ENCODE measurements at regions of chr5 and their contacts with region 1.

Region 1: GRCh38 chr5:132007399-132008165 is 3.9 kb downstream of the ACSL6 start:
- DNase-seq: peak; percentile 64 to 94 (median 80)
- H3K4me3 ChIP-seq: peak overlapping the region in 6 of 59 donors; percentile 12 to 87 (median 51)
- H3K27ac ChIP-seq: peak overlapping the region; percentile 6 to 99 (median 90)
- H3K27me3 ChIP-seq: no peaks in the 10 kb centered on the region
- CTCF ChIP-seq: peak; percentile 68 to 96 (median 86)

Region 2: DNA sequence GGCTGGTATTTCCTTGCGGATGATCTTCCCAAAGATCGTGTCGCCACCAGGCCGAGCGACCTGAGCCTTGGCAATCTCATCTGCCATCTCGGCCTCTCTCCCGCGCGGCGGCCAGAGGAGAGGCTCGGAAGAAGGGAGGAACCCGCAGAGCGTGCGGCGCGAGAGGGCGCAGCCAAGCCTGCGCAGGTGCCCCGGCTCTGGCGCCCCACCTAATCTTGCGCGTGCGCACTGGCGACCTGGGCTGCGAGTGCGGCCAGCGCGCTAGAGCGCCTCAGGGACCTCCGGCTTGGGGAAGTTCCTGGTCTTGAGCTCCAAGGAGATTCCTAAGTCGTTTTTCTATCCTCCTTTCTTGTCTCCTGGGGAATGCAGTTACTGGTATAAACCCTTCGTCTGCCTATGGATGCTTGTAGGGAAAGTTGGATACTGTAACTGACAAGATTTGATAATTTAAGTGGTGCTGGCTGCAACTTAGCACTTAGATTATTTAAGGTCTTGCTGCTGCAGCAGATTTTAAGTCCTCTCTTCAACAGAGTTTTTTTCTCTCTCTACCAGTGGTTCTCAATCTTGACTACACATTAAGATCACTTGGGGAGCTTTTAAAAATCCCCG is 842.4 kb before region 1 on chr5 and contains the start of gene HINT1:
- intact Hi-C with region 1: loop called in 1 of 2 experiments (anchors 10 kb)
- DNase-seq: peak; percentile 71 to 92 (median 86)
- H3K4me3 ChIP-seq: peak within 1 kb of the TSS; percentile 60 to 97 (median 89)
- H3K27ac ChIP-seq: peak within 1 kb of the TSS; percentile 65 to 99 (median 97)
- H3K27me3 ChIP-seq: no peaks in the 10 kb centered on the region
- CTCF ChIP-seq: peak in 49 of 56 donors; percentile 17 to 75 (median 51)
- total RNA-seq, gene HINT1: 99.1 to 267 (median 191) TPM

Region 3: GRCh38 chr5:131589510-131590348 is 417.9 kb before region 1 on chr5:
- intact Hi-C with region 1: loop called (anchors 2 to 5 kb)
- DNase-seq: no peak
- H3K4me3 ChIP-seq: no peak overlapping the region
- H3K27ac ChIP-seq: peak overlapping the region in 46 of 59 donors; percentile 2 to 77 (median 48)
- H3K27me3 ChIP-seq: no peaks in the 10 kb centered on the region
- CTCF ChIP-seq: peak; percentile 68 to 97 (median 87)

Region 4: DNA sequence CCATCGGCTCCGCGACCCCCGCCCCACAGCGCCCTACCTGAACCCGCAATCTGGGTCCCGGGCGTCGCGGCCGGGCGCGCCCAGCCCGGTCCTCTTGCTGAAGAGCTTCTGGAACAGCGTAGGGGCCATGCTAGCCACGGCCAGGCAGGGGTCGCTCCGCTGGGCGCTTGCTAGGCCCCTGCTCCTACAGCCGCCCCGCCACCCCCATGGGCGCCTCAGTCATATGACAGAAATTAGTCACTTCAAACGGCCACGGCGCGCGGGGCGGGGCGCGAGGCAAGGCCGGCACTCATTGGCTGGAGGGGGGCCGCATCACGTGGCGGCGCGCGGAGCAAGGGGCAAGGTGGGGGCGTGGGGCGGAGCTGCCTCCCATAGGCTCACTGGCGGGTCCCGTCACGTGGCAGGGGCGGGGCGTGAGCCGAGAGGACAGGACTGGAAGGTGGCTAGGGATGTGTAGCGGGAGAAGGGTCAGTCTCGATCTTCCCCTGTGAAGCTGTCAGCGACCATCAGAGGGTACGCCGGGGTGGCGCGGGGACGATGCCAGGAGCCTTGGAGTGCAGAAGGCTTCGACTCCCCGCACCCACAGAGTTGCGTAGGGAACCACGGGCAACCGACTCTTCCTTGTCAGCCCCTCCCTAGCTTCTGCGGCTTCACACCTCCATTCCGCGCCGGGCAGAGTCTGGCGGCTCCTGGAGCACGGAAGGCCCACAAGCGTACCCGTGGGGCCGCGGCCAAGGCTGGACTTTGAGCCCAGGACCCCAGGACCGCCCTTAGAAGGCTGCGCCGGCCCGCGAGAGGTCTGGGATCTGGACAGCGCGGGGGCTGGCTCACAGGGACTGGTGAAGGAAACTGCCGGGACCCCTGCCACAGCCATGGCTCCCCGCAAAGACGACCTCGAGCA is 210.5 kb before region 1 on chr5 and contains the start of gene FNIP1:
- intact Hi-C with region 1: loop called (anchors 5 kb)
- DNase-seq: peak; percentile 99 to 100 (median 100)
- H3K4me3 ChIP-seq: peak within 1 kb of the TSS; percentile 68 to 100 (median 97)
- H3K27ac ChIP-seq: peak within 1 kb of the TSS; percentile 95 to 100 (median 99)
- H3K27me3 ChIP-seq: no peaks in the 10 kb centered on the region
- CTCF ChIP-seq: peak in 21 of 56 donors; percentile 8 to 46 (median 21)
- total RNA-seq, gene FNIP1: 40.0 to 84.5 (median 54.3) TPM

Region 5: GRCh38 chr5:131986161-131986912 is 21.2 kb before region 1 on chr5:
- intact Hi-C with region 1: loop called in 1 of 2 experiments (anchors 2 kb)
- DNase-seq: peak in 2 of 10 donors; percentile 35 to 67
- H3K4me3 ChIP-seq: no peak overlapping the region
- H3K27ac ChIP-seq: peak overlapping the region in 56 of 59 donors; percentile 7 to 90 (median 78)
- H3K27me3 ChIP-seq: no peaks in the 10 kb centered on the region
- CTCF ChIP-seq: no peak

Region 6: DNA sequence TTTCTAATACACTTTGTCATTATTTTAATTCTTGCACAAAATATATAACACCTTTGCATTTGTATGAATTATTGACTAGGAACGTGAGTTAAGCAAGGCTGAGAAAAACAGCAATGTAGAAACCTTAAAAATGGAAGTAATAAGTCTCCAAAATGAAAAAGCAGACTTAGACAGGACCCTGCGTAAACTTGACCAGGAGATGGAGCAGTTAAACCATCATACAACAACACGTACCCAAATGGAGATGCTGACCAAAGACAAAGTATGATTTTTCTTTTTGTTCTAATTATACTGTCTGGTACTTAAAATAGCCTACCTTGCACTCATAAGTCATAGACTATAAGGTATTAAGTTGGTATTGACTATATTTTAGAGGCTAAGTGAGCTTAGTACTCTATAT is 583.6 kb after region 1 on chr5:
- intact Hi-C with region 1: no loop called
- DNase-seq: no peak
- H3K4me3 ChIP-seq: no peak overlapping the region
- H3K27ac ChIP-seq: no peak overlapping the region
- H3K27me3 ChIP-seq: no peaks in the 10 kb centered on the region
- CTCF ChIP-seq: peak in 24 of 56 donors; percentile 10 to 46 (median 26)